ENCODE measurements at regions of chr2 and their contacts with region 1.

Region 1: GRCh38 chr2:37555457-37555856 is 116.0 kb downstream of the CDC42EP3 start:
- DNase-seq: peak; percentile 50
- ATAC-seq: peak; percentile 95
- H3K4me3 Mint-ChIP-seq: no peak overlapping the region
- H3K27ac Mint-ChIP-seq: no peak overlapping the region
- H3K4me1 Mint-ChIP-seq: peaks cover 40% of the 10 kb centered on the region
- H3K27me3 Mint-ChIP-seq: no peaks in the 10 kb centered on the region
- CTCF ChIP-seq: no peak

Region 2: GRCh38 chr2:36988008-36988407 is 567.4 kb before region 1 on chr2:
- CTCF ChIA-PET with region 1: no interaction called
- POLR2A ChIA-PET with region 1: no interaction called
- intact Hi-C with region 1: no loop called
- DNase-seq: no peak
- ATAC-seq: no peak
- H3K4me3 Mint-ChIP-seq: no peak overlapping the region
- H3K27ac Mint-ChIP-seq: no peak overlapping the region
- H3K4me1 Mint-ChIP-seq: no peaks in the 10 kb centered on the region
- H3K27me3 Mint-ChIP-seq: no peaks in the 10 kb centered on the region
- CTCF ChIP-seq: no peak

Region 3: DNA sequence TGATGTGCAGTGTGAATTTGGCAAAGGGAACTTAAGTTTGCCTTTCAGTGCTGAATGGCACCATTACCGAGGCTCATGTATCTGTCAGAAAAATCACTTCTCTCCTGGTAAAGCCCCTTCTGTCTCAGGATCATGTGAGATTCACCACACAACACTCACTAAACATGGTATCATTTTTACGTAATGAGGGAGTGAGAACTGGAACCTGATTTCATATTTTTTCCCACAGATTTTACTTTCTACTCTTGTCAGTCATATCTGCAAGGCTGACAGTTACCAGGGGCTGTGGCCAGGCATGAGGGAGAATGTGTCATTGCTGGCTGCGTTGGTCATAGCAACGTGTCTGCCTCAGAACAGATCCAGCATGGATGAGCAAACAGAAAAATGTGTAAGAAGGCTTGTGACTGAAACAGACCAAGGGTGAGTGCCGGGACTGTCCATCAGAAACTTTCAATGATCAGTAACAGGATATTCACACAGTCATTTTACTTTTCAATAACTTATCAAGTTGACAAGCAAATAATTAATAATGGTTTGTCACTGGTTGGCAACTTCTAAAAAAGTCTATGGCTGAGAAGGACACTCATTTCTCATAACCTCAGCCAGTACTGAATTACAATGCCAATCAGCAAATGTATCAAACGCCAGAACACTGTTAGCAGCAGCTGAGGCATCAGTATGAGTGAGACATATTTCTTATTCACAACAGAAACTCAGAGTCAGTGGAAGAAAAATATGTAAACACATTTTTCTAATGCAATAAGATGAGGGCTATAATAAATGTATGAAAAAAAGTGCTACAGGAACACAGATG is 15.5 kb after region 1 on chr2:
- CTCF ChIA-PET with region 1: no interaction called
- POLR2A ChIA-PET with region 1: interaction called, 6 read pairs
- intact Hi-C with region 1: loop called (anchors 2 kb)
- DNase-seq: no peak
- ATAC-seq: peak; percentile 48
- H3K4me3 Mint-ChIP-seq: no peak overlapping the region
- H3K27ac Mint-ChIP-seq: peak overlapping the region; percentile 38
- H3K4me1 Mint-ChIP-seq: peaks cover 28% of the 10 kb centered on the region
- H3K27me3 Mint-ChIP-seq: no peaks in the 10 kb centered on the region
- CTCF ChIP-seq: no peak

Region 4: DNA sequence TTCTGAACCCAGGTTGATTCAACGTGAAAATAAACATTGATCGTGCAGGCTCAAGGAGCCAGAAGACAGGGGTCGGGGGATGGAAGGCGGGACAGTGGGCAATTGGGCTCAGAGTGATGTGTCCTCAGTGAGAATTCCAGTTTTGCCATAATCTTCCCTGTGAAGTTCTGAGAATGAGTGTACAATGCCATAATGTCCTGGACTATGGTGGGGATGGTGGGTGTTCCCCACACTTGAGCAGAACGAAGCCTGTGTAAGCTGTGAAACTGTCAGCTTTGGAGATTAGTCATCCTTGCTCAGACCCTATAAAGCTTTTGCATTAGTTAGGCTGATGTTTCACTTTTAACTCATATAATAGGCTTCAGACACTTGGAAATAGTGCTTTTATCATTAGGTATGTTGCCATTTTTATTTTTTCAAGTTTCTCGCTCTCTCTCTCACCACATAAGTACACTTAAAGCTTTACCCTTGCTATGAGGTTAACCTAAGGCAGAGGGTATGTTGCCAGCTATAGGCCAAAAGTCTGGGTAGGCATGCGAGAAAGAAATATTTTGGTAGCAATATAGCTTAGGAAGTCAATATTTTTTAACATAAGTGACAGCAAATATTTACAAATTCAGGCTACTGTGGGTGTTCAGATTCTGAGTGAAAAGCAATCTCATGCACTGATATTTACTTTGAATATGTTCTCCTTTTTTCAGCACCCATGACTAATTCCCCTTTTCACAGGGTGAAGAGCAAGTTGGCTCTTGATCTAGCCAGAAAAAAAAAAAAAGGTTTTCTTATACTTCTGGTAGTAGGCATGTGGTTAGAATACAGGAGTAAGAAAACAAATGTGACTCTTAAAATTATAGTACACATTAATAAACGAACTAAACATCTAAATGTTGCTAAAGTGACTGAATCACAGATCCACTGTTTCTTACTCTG is 68.8 kb after region 1 on chr2:
- CTCF ChIA-PET with region 1: interaction called, 3 read pairs
- POLR2A ChIA-PET with region 1: interaction called, 4 read pairs
- intact Hi-C with region 1: loop called (anchors 1 kb)
- DNase-seq: no peak
- ATAC-seq: peak; percentile 82
- H3K4me3 Mint-ChIP-seq: peak overlapping the region; percentile 64
- H3K27ac Mint-ChIP-seq: peak overlapping the region; percentile 89
- H3K4me1 Mint-ChIP-seq: peaks cover 70% of the 10 kb centered on the region
- H3K27me3 Mint-ChIP-seq: no peaks in the 10 kb centered on the region
- CTCF ChIP-seq: no peak

Region 5: DNA sequence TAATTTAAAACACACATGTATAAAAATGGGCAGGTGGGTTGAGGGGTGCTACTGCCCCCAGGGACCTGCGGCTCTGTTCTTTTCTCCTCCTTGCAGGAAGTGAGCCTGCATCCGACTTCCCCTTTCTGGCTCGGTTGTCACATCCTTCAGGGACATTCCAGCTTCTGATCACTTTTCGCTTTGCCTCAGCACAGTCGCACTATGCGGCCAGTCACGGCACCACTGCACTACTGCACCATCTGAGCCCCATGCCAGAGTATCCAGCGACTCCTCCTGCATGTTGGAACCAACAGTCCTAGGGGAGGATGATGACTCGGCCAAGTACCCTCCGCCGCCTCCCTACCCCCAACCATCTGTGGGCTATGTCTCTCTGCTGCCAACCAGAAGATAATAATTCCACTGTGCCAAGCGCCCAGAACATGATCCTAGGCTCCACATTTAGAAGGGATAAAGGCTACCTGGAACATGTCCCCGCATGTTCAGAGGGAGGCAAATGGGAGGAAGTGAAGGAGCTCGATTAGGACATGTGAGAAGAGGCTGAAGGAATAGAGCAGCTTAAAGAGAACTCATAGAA is 98.4 kb after region 1 on chr2:
- CTCF ChIA-PET with region 1: interaction called, 4 read pairs
- POLR2A ChIA-PET with region 1: interaction called, 4 read pairs
- intact Hi-C with region 1: loop called (anchors 2 kb)
- DNase-seq: peak; percentile 52
- ATAC-seq: peak; percentile 62
- H3K4me3 Mint-ChIP-seq: peak overlapping the region; percentile 67
- H3K27ac Mint-ChIP-seq: peak overlapping the region; percentile 78
- H3K4me1 Mint-ChIP-seq: peaks cover 95% of the 10 kb centered on the region
- H3K27me3 Mint-ChIP-seq: no peaks in the 10 kb centered on the region
- CTCF ChIP-seq: no peak

Region 6: GRCh38 chr2:38750891-38751595 is 1195.6 kb after region 1 on chr2 and contains the start of gene SRSF7:
- CTCF ChIA-PET with region 1: no interaction called
- POLR2A ChIA-PET with region 1: no interaction called
- intact Hi-C with region 1: no loop called
- DNase-seq: peak; percentile 98
- ATAC-seq: peak; percentile 75
- H3K4me3 Mint-ChIP-seq: peak within 1 kb of the TSS; percentile 98
- H3K27ac Mint-ChIP-seq: peak within 1 kb of the TSS; percentile 99
- H3K4me1 Mint-ChIP-seq: peaks cover 59% of the 10 kb centered on the region
- H3K27me3 Mint-ChIP-seq: no peaks in the 10 kb centered on the region
- CTCF ChIP-seq: no peak
- total RNA-seq, gene SRSF7: 247 and 254 TPM in 2 replicates

Measured in activated B cell treated with CpG ODN at 0.5 μM for 24 hours (primary cell).